MCF 10A (cell line): ENCODE measurements at regions of chr3 and their contacts with region 1.

Region 1: GRCh38 chr3:69120879-69121464 is 1.4 kb downstream of the LMOD3 start:
- DNase-seq: peak; percentile 87
- H3K4me3 Mint-ChIP-seq: no peak overlapping the region
- H3K27ac Mint-ChIP-seq: no peak overlapping the region
- H3K4me1 Mint-ChIP-seq: no peaks in the 10 kb centered on the region
- H3K27me3 Mint-ChIP-seq: no peaks in the 10 kb centered on the region
- CTCF ChIP-seq: peak; percentile 88

Region 2: GRCh38 chr3:68424796-68425460 is 696.0 kb before region 1 on chr3:
- CTCF ChIA-PET with region 1: no interaction called
- POLR2A ChIA-PET with region 1: no interaction called
- intact Hi-C with region 1: no loop called
- DNase-seq: no peak
- H3K4me3 Mint-ChIP-seq: no peak overlapping the region
- H3K27ac Mint-ChIP-seq: no peak overlapping the region
- H3K4me1 Mint-ChIP-seq: no peaks in the 10 kb centered on the region
- H3K27me3 Mint-ChIP-seq: peaks cover 19% of the 10 kb centered on the region
- CTCF ChIP-seq: no peak

Region 3: DNA sequence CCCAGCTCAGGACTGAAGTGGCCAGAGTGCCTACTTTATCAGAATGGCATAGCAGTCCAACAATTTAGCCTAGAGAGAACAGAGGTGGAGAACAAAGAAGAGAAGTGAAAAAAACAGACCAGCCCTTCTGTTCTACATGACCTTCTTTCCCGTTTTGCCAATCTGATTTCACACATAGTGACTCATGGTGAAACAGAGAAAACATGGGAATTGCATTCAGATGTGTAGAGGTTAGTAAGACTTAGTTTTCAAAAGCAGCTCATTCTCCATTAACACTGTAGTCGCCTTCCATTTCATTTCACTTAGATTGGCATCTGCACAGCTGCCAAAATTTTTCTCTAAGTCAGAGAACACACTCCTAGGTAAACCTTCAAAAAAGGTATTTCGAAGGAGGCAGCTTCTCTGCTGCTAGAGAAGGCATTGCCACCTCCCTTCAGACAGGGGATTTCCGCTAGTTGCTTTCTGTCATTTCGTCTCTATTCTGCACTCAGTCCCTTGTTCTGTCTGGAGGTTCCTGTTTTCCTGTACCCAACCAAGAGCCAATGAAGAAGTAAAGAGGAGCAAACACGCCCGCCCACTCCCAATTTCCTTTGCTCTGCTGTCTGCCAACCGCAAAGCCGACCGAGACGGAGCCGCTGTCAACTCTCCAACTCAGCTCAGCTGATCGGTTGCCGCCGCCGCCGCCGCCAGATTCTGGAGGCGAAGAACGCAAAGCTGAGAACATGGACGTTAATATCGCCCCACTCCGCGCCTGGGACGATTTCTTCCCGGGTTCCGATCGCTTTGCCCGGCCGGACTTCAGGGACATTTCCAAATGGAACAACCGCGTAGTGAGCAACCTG is 36.4 kb before region 1 on chr3 and contains the start of gene ARL6IP5:
- CTCF ChIA-PET with region 1: interaction called, 5 read pairs
- POLR2A ChIA-PET with region 1: interaction called, 4 read pairs
- intact Hi-C with region 1: loop called (anchors 5 kb)
- DNase-seq: peak; percentile 92
- H3K4me3 Mint-ChIP-seq: peak within 1 kb of the TSS; percentile 81
- H3K27ac Mint-ChIP-seq: peak within 1 kb of the TSS; percentile 85
- H3K4me1 Mint-ChIP-seq: peaks cover 39% of the 10 kb centered on the region
- H3K27me3 Mint-ChIP-seq: no peaks in the 10 kb centered on the region
- CTCF ChIP-seq: no peak
- total RNA-seq, gene ARL6IP5: 50.0 and 81.6 TPM in 2 replicates

Region 4: GRCh38 chr3:69104996-69105719 is 15.8 kb before region 1 on chr3:
- CTCF ChIA-PET with region 1: interaction called, 12 read pairs
- POLR2A ChIA-PET with region 1: interaction called, 3 read pairs
- intact Hi-C with region 1: no loop called
- DNase-seq: no peak
- H3K4me3 Mint-ChIP-seq: no peak overlapping the region
- H3K27ac Mint-ChIP-seq: no peak overlapping the region
- H3K4me1 Mint-ChIP-seq: no peaks in the 10 kb centered on the region
- H3K27me3 Mint-ChIP-seq: no peaks in the 10 kb centered on the region
- CTCF ChIP-seq: no peak

Region 5: GRCh38 chr3:69143605-69144004 is 22.6 kb after region 1 on chr3:
- CTCF ChIA-PET with region 1: interaction called, 21 read pairs
- POLR2A ChIA-PET with region 1: no interaction called
- intact Hi-C with region 1: no loop called
- DNase-seq: peak; percentile 65
- H3K4me3 Mint-ChIP-seq: no peak overlapping the region
- H3K27ac Mint-ChIP-seq: no peak overlapping the region
- H3K4me1 Mint-ChIP-seq: peaks cover 18% of the 10 kb centered on the region
- H3K27me3 Mint-ChIP-seq: no peaks in the 10 kb centered on the region
- CTCF ChIP-seq: no peak

Region 6: GRCh38 chr3:69425261-69425660 is 304.3 kb after region 1 on chr3:
- CTCF ChIA-PET with region 1: interaction called, 6 read pairs
- POLR2A ChIA-PET with region 1: no interaction called
- intact Hi-C with region 1: loop called (anchors 5 kb)
- DNase-seq: peak; percentile 62
- H3K4me3 Mint-ChIP-seq: no peak overlapping the region
- H3K27ac Mint-ChIP-seq: no peak overlapping the region
- H3K4me1 Mint-ChIP-seq: peaks cover 18% of the 10 kb centered on the region
- H3K27me3 Mint-ChIP-seq: no peaks in the 10 kb centered on the region
- CTCF ChIP-seq: peak; percentile 74